Posterior vena cava (tissue), 2 donors: ENCODE measurements at regions of chr14 and their contacts with region 1.

Region 1: DNA sequence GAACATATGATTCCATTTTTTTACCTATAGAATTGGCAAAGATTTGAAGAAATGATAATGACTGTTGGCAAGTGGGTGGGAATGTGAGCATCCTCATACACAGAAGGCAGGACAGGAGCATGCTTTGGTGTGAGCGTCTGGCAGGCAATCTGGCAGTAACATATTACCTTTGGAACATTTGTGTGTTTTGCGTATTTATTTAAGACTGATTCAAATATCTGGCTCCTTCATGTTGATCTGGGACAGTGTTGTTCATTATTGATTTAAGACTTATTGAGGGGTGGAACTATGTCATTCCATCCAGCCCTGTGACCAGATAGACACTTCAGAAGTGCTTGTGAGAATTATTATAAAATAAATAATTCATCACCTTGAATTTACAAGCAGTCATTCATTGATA is 53.1 kb downstream of the PPP1R36 start:
- DNase-seq: no peak

Region 2: GRCh38 chr14:64581363-64581762 is 21.5 kb before region 1 on chr14:
- intact Hi-C with region 1: loop called in 1 of 2 experiments (anchors 1 kb)
- DNase-seq: no peak